ENCODE measurements at regions of chr16 and their contacts with region 1.

Region 1: DNA sequence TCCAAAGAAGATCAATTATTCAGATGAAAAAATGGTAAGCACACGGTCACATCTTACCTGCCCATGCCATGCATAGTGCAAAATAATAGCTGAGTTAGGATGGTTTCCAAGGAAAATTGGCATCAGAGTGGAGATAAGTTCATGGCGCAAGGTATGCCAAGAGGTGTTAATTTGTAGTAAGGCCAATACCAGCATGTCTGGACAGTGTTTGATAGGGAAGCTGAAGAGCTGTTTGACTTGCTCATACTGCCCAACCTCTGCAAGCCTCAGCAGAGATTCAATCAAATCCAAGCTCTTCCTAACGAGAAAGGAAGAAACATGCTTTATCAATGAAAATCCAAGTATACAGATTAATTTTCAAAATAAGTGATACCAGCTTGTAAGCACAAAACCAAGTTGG is 51.0 kb downstream of the CNOT1 start:
- DNase-seq: no peak
- ATAC-seq: no peak
- H3K4me3 ChIP-seq: no peak overlapping the region
- H3K27ac ChIP-seq: no peak overlapping the region
- H3K4me1 ChIP-seq: no peaks in the 10 kb centered on the region
- H3K27me3 ChIP-seq: no peaks in the 10 kb centered on the region
- CTCF ChIP-seq: no peak
- POLR2A ChIP-seq: no peak
- RAD21 ChIP-seq: no peak

Region 2: GRCh38 chr16:58264961-58265479 is 313.6 kb before region 1 on chr16:
- CTCF ChIA-PET with region 1: no interaction called
- POLR2A ChIA-PET with region 1: no interaction called
- RAD21 ChIA-PET with region 1: no interaction called
- intact Hi-C with region 1: no loop called
- DNase-seq: no peak
- ATAC-seq: peak; percentile 81
- H3K4me3 ChIP-seq: no peak overlapping the region
- H3K27ac ChIP-seq: peak overlapping the region; percentile 10; the same call in 1 of the 2 replicates
- H3K4me1 ChIP-seq: peaks cover 4 to 15% of the 10 kb centered on the region in 2 experiments; a peak in 3 of 4 replicates
- H3K27me3 ChIP-seq: no peaks in the 10 kb centered on the region
- CTCF ChIP-seq: no peak
- POLR2A ChIP-seq: no peak
- RAD21 ChIP-seq: no peak

Region 3: DNA sequence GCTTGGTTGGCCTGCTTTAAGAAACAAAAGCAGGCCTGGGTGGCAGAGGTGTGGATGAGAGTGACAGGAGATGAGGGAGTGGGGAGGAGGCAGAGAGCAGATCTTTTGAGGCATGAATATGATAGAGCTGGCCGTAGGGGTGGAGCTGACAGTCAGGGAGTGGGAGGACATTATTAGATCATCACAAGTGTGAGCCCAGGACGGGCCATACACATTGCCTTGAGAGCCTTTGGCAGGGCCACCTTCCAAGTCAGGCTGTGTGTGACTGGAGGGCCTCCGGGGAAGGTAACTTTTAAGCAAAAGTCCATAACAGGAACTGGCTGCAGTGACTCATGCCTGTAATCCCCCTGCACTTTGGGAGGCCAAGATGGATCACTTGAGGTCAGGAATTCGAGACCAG is 160.0 kb before region 1 on chr16:
- CTCF ChIA-PET with region 1: no interaction called
- POLR2A ChIA-PET with region 1: no interaction called
- RAD21 ChIA-PET with region 1: no interaction called
- intact Hi-C with region 1: no loop called
- DNase-seq: no peak
- ATAC-seq: peak; percentile 36; the same call in 1 of the 2 replicates
- H3K4me3 ChIP-seq: no peak overlapping the region
- H3K27ac ChIP-seq: no peak overlapping the region
- H3K4me1 ChIP-seq: peaks cover 0 to 7% of the 10 kb centered on the region in 2 experiments; a peak in 2 of 4 replicates
- H3K27me3 ChIP-seq: no peaks in the 10 kb centered on the region
- CTCF ChIP-seq: no peak
- POLR2A ChIP-seq: no peak
- RAD21 ChIP-seq: no peak

Region 4: GRCh38 chr16:58487566-58488351 is 90.9 kb before region 1 on chr16:
- CTCF ChIA-PET with region 1: no interaction called
- POLR2A ChIA-PET with region 1: no interaction called
- RAD21 ChIA-PET with region 1: no interaction called
- intact Hi-C with region 1: no loop called
- DNase-seq: peak; percentile 56
- ATAC-seq: peak; percentile 95
- H3K4me3 ChIP-seq: no peak overlapping the region
- H3K27ac ChIP-seq: no peak overlapping the region
- H3K4me1 ChIP-seq: peaks cover 0 to 4% of the 10 kb centered on the region in 2 experiments; a peak in 3 of 4 replicates
- H3K27me3 ChIP-seq: no peaks in the 10 kb centered on the region
- CTCF ChIP-seq: peak; percentile 86 to 97 (median 91)
- POLR2A ChIP-seq: no peak
- RAD21 ChIP-seq: peak; percentile 95

Region 5: DNA sequence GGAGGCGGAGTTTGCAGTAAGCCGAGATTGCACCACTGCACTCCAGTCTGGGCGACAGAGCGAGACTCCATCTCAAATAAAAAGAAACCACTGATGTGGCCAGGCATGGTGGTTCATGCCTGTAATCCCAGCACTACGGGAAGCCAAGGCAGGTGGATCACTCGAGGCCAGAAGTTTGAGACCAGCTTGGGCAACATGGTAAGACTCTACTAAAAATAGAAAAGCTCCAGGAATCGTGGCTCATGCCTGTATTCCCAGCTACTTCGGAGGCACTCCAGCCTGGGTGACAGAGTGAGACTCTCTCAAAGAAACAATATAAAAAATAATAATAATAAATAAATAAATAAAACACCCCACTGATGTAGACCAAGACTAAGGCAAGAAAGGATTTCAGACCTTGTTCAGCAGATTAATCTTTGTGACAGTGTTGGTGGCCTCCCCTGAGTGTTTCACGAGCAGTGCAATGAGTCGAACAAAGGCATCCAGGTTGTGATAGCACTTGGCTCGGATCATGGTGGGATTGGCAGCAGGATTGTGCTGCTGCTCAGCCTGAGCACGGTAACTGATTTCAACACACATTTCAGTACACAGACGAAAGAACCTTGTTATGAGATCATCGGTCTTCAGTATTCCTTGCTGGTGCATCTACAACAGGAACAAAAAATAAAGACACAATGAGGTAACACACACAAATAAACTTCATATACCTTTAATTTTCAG is 44.7 kb before region 1 on chr16:
- CTCF ChIA-PET with region 1: no interaction called
- POLR2A ChIA-PET with region 1: no interaction called
- RAD21 ChIA-PET with region 1: no interaction called
- intact Hi-C with region 1: loop called (anchors 5 kb)
- DNase-seq: no peak
- ATAC-seq: no peak
- H3K4me3 ChIP-seq: no peak overlapping the region
- H3K27ac ChIP-seq: no peak overlapping the region
- H3K4me1 ChIP-seq: no peaks in the 10 kb centered on the region
- H3K27me3 ChIP-seq: no peaks in the 10 kb centered on the region
- CTCF ChIP-seq: no peak
- POLR2A ChIP-seq: no peak
- RAD21 ChIP-seq: no peak

Region 6: GRCh38 chr16:58541711-58542110 is 36.9 kb before region 1 on chr16:
- CTCF ChIA-PET with region 1: no interaction called
- POLR2A ChIA-PET with region 1: no interaction called
- RAD21 ChIA-PET with region 1: no interaction called
- intact Hi-C with region 1: loop called (anchors 5 kb)
- DNase-seq: no peak
- ATAC-seq: no peak
- H3K4me3 ChIP-seq: no peak overlapping the region
- H3K27ac ChIP-seq: no peak overlapping the region
- H3K4me1 ChIP-seq: no peaks in the 10 kb centered on the region
- H3K27me3 ChIP-seq: no peaks in the 10 kb centered on the region
- CTCF ChIP-seq: no peak
- POLR2A ChIP-seq: no peak
- RAD21 ChIP-seq: no peak

Measured in HCT116 (cell line).